ENCODE measurements at regions of chr2 and their contacts with region 1.

Region 1: DNA sequence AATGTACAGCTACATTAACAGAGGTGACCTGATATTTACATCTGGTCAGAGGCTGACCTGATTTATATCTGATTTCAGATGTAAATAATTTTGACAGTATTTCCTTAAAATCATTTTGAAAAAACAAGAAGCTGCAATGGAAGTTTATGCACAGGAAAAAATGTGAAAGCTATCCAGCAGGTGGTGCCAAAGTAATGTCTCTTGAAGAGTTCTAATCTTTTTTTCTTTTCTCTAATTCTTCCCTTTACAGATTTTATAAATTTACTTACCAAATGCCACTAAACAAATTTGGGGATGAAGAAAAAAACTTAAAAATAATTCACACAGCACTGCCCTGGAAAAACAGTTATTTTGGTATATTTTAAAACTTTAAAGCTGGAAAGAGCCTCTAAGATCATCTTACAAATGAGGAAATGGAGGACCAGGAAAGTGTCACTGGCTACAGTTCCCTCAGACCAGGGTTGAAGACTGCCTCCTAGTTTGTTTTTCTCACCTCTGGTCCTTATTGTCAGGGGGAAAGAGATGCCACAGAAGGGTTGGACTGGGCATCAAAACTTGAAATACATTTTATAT is 16.4 kb upstream of the FBLN7 start:
- DNase-seq: peak; percentile 55
- ATAC-seq: no peak
- H3K4me3 ChIP-seq: no peak overlapping the region
- H3K27ac ChIP-seq: no peak overlapping the region
- H3K4me1 ChIP-seq: no peaks in the 10 kb centered on the region
- H3K27me3 ChIP-seq: no peaks in the 10 kb centered on the region
- CTCF ChIP-seq: peak; percentile 73
- EP300 ChIP-seq: no peak
- POLR2A ChIP-seq: no peak
- RAD21 ChIP-seq: peak; percentile 56; the same call in 1 of the 2 replicates

Region 2: DNA sequence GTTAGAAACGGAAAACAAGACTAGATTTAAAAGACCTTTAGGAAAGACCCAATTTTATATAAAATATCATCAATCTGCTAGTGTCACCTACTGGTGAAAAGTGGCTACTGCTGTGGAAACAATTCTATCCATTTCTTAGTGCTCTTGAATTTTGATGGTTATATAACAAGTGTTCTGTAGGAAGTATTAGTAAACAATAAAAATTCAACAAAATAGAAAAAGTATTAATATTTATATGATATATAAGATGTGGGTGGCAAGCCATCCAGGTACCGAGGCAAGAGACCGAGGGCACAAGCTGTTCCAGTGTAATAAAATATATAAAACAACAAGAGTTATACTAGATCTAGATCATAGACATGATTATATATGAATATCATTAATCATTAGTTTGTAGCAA is 72.9 kb before region 1 on chr2:
- CTCF ChIA-PET with region 1: no interaction called
- POLR2A ChIA-PET with region 1: no interaction called
- in situ Hi-C with region 1: no loop called
- intact Hi-C with region 1: loop called (anchors 1 kb)
- DNase-seq: peak; percentile 71
- ATAC-seq: no peak
- H3K4me3 ChIP-seq: peak overlapping the region in 1 of 3 experiments; percentile 49; a peak in 1 of 6 replicates
- H3K27ac ChIP-seq: no peak overlapping the region
- H3K4me1 ChIP-seq: peaks cover 39% of the 10 kb centered on the region
- H3K27me3 ChIP-seq: no peaks in the 10 kb centered on the region; a peak in 1 of 5 replicates
- CTCF ChIP-seq: peak; percentile 70
- EP300 ChIP-seq: no peak
- POLR2A ChIP-seq: no peak
- RAD21 ChIP-seq: no peak

Region 3: DNA sequence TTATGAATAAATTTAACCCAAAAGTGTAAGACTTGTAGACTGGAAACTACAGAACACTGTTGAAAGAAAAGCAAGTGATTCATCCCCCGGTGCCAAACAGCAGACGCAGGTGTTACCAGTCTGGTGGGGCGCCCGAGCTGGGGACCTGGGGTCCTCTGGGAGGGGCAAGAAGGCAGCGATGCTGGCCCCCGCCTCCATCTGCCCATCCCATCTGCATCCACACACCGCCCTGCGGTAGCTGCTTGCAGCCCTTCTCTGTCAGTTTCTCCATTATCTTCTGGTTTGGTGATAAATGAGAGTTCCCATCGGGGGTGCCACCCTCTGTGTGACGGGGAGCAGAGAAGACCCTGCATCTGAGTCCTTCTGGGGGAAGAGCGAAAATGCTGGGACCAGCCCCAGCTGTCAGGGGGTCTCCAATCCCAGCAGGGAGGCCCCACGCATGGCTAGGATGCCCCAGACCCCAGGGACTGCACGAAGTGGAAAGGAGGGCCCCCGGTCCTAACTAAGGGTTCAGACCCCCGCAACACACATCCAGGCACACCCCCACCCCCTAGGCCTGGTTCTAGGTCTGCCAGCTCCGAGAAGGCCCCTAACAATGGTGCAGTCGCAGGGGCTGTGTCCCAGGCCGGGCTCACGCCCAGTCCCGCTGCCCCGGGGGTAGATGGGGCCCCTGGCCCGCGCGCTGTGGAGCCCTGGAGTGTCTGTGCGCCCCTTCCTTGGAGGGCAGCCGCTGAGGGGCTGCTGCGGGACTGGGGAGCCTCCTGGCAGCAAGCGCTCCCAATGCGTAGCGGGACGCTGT is 312.4 kb after region 1 on chr2:
- CTCF ChIA-PET with region 1: interaction called, 14 read pairs
- POLR2A ChIA-PET with region 1: no interaction called
- in situ Hi-C with region 1: loop called (anchors 10 kb)
- intact Hi-C with region 1: no loop called
- DNase-seq: no peak
- ATAC-seq: no peak
- H3K4me3 ChIP-seq: peak overlapping the region in 1 of 3 experiments; percentile 58; a peak in 1 of 6 replicates
- H3K27ac ChIP-seq: no peak overlapping the region
- H3K4me1 ChIP-seq: peaks cover 37% of the 10 kb centered on the region
- H3K27me3 ChIP-seq: peaks cover 0 to 18% of the 10 kb centered on the region in 2 experiments; a peak in 1 of 5 replicates
- CTCF ChIP-seq: no peak
- EP300 ChIP-seq: no peak
- POLR2A ChIP-seq: no peak
- RAD21 ChIP-seq: no peak

Region 4: DNA sequence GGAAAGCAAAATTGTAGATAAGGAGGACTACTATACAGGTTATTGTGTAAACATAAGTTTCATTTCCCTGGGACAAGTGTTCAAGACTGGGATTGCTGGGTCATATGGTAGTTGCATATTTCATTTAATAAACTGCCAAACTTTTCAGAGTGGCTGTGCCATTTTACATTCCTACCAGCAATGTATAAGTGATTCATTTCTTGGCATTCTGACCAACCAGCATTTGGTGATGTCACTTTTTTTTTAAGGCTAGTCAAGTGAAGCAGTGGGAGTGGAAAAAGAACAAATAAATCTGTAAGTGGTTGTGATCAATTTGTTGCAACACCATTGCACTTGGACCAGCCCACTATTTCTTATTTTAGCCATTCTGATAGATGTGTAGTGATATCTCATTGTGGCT is 457.5 kb after region 1 on chr2:
- CTCF ChIA-PET with region 1: no interaction called
- POLR2A ChIA-PET with region 1: no interaction called
- in situ Hi-C with region 1: no loop called
- intact Hi-C with region 1: loop called (anchors 5 kb)
- DNase-seq: no peak
- ATAC-seq: no peak
- H3K4me3 ChIP-seq: no peak overlapping the region
- H3K27ac ChIP-seq: no peak overlapping the region
- H3K4me1 ChIP-seq: peaks cover 17% of the 10 kb centered on the region
- H3K27me3 ChIP-seq: peaks cover 0 to 4% of the 10 kb centered on the region in 2 experiments; a peak in 1 of 5 replicates
- CTCF ChIP-seq: no peak
- EP300 ChIP-seq: no peak
- POLR2A ChIP-seq: no peak
- RAD21 ChIP-seq: no peak

Measured in HepG2 (cell line).